Activated naive CD4-positive, alpha-beta T cell treated with anti-CD3 and anti-CD28 coated beads, Interleukin-2, amount 10 ng/mL, durations not matched to agents 7 days and 5 days (primary cell): ENCODE measurements at regions of chr12 and their contacts with region 1.

Region 1: DNA sequence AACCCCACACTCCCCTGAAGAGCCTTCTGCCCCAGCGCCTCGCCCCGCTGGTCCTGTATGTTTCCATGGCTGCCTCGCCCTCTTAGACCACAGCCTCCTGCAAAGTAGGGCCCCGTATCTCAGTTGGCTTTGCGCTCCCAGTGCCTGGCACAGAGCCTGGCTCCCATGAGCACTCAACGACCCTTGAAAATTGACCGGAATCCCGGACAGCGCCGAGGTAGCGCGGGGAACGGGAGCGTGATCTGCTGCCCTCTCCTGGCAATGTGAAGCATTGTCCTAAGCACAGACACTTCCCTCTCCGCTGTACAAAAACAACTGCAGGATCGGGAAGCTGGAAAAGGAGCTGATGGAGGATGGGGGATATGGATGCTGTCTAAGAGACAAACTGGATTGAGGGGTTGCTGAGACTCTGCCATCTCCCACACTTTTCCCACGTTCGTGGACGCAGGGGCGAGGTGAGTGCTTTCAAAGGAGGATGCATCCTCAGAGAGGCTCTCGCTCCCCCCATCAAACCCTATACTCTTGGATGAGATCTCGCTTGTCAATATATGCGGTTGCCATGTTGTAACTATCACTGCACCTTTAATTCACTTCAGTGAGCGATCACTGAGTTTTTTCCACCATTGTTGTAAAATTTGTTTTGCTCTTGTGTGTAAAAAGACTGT is 10.7 kb upstream of the FKBP4 start:
- DNase-seq: peak; percentile 65
- H3K4me3 Mint-ChIP-seq: peak overlapping the region; percentile 36
- H3K27ac Mint-ChIP-seq: no peak overlapping the region
- H3K4me1 Mint-ChIP-seq: peaks cover 8% of the 10 kb centered on the region
- H3K27me3 Mint-ChIP-seq: peaks cover 23% of the 10 kb centered on the region

Region 2: GRCh38 chr12:2535583-2536204 is 248.4 kb before region 1 on chr12:
- CTCF ChIA-PET with region 1: no interaction called
- DNase-seq: no peak
- H3K4me3 Mint-ChIP-seq: no peak overlapping the region
- H3K27ac Mint-ChIP-seq: no peak overlapping the region
- H3K4me1 Mint-ChIP-seq: no peaks in the 10 kb centered on the region
- H3K27me3 Mint-ChIP-seq: peaks cover 8% of the 10 kb centered on the region

Region 3: DNA sequence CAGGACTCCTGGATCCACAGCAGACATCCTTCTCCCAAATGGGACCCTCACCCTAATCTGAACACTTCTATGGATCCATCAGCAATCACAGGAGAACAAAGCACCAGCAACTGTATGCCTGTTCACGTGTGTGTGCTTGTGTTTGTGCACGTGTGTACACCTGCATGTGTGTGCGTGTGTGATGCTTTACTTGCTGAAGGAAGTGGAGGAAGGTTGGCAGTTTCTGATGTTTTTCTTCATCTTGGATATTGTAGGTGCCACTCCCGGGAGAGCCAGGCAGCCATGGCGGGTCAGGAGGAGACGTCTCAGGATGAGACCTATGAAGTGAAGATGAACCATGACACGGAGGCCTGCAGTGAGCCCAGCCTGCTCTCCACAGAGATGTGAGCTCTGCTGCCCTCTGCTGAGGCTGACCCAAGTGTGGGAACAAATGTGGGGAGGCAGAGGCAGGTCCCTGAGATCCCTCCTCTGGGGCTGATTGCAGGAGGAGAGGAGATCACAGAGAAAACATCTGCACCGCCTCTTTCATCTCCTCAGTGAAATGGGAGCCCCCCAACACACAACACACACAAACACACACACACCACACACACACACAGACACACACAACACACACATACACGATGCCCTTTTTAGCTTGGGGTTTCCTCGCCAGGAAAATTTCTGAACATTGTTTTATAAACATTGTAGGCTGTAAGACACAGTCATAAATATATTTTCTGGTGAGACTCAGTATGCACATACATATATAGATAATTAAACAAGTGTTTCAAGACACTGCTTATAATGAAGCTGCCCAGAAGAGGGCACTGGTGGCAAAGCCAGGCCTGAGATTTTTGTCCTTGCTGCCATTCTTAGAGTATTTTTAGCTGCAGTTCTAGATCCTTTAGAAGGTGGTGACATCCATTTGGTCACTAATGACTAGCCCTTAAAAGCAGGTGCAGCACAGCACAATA is 101.5 kb before region 1 on chr12:
- CTCF ChIA-PET with region 1: interaction called, 50 read pairs
- DNase-seq: peak; percentile 75
- H3K4me3 Mint-ChIP-seq: peak overlapping the region; percentile 69
- H3K27ac Mint-ChIP-seq: peak overlapping the region; percentile 95
- H3K4me1 Mint-ChIP-seq: peaks cover 14% of the 10 kb centered on the region
- H3K27me3 Mint-ChIP-seq: peaks cover 6% of the 10 kb centered on the region

Region 4: DNA sequence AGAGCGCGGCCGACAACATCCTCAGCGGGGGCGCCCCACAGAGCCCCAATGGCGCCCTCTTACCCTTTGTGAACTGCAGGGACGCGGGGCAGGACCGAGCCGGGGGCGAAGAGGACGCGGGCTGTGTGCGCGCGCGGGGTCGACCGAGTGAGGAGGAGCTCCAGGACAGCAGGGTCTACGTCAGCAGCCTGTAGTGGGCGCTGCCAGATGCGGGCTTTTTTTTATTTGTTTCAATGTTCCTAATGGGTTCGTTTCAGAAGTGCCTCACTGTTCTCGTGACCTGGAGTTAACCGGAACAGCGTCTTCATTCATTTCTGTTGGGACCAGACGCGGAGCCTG is 93.1 kb before region 1 on chr12:
- CTCF ChIA-PET with region 1: interaction called, 22 read pairs
- DNase-seq: peak; percentile 80
- H3K4me3 Mint-ChIP-seq: peak overlapping the region; percentile 87
- H3K27ac Mint-ChIP-seq: peak overlapping the region; percentile 95
- H3K4me1 Mint-ChIP-seq: peaks cover 47% of the 10 kb centered on the region
- H3K27me3 Mint-ChIP-seq: peaks cover 26% of the 10 kb centered on the region

Region 5: GRCh38 chr12:2759733-2760132 is 24.3 kb before region 1 on chr12:
- CTCF ChIA-PET with region 1: no interaction called
- DNase-seq: no peak
- H3K4me3 Mint-ChIP-seq: no peak overlapping the region
- H3K27ac Mint-ChIP-seq: no peak overlapping the region
- H3K4me1 Mint-ChIP-seq: no peaks in the 10 kb centered on the region
- H3K27me3 Mint-ChIP-seq: no peaks in the 10 kb centered on the region